Body of pancreas (tissue), 4 donors: ENCODE measurements at regions of chr2 and their contacts with region 1.

Region 1: GRCh38 chr2:210399440-210400041 is 77.0 kb downstream of the LANCL1 start:
- DNase-seq: no peak
- ATAC-seq: no peak
- H3K4me3 ChIP-seq: no peak overlapping the region
- H3K27ac ChIP-seq: no peak overlapping the region
- H3K4me1 ChIP-seq: no peaks in the 10 kb centered on the region
- H3K27me3 ChIP-seq: no peaks in the 10 kb centered on the region
- CTCF ChIP-seq: peak; percentile 19 to 59 (median 50)
- POLR2A ChIP-seq: no peak

Region 2: DNA sequence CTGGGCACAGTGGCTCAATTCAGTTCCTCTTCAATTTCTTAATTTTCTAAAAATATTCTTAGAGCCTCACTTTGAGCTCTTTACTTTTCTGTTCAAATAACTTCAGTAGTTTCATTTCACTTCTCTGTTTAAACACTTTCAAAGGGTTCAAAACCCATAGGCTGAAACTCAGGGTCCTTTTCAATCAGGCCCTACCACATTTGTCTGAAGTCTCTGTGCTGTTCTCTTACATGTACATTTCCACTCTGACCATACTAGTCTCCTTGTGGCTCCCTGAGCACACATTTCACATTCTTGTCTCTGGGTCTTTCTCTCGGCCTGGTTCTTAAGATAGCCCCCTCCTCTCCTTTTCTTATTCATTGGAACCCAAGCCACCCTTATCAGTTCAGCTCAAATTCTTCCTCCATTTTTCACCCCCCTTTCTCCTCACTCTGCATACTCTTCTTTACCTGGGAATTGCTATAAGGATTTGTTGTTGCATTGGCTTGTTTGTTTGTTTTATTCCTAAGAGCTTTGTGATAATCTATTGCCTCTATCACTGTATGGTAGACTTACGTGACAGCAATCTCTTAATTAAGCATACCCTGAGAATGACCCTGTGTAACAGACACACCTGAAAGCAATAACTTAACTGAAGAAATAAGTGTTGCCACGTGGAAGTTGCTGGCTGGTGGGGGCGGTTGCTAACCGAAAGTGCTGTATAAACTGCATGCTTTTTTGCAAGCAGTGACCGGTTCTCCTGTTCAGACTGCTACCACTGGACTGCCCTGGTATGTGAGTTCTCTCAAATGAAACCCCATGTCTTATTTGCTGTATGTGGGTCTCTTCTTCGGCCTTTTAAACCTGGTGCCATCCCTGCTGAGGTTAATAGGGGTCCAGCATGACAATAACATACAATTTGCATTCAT is 146.6 kb before region 1 on chr2:
- intact Hi-C with region 1: loop called (anchors 10 kb)
- DNase-seq: no peak
- ATAC-seq: no peak
- H3K4me3 ChIP-seq: no peak overlapping the region
- H3K27ac ChIP-seq: no peak overlapping the region
- H3K4me1 ChIP-seq: peaks cover 9% of the 10 kb centered on the region
- H3K27me3 ChIP-seq: no peaks in the 10 kb centered on the region
- CTCF ChIP-seq: no peak
- POLR2A ChIP-seq: no peak

Region 3: GRCh38 chr2:210445116-210445707 is 45.7 kb after region 1 on chr2:
- intact Hi-C with region 1: no loop called
- DNase-seq: no peak
- ATAC-seq: no peak
- H3K4me3 ChIP-seq: no peak overlapping the region
- H3K27ac ChIP-seq: no peak overlapping the region
- H3K4me1 ChIP-seq: peaks cover 5% of the 10 kb centered on the region
- H3K27me3 ChIP-seq: no peaks in the 10 kb centered on the region
- CTCF ChIP-seq: peak; percentile 13 to 81 (median 52)
- POLR2A ChIP-seq: no peak